ENCODE measurements at regions of chr1 and their contacts with region 1.

Region 1: GRCh38 chr1:229514578-229515275 is 6.6 kb upstream of the NUP133 start:
- DNase-seq: peak; percentile 19
- ATAC-seq: peak; percentile 97
- H3K4me3 Mint-ChIP-seq: no peak overlapping the region
- H3K27ac Mint-ChIP-seq: no peak overlapping the region
- H3K4me1 Mint-ChIP-seq: peaks cover 4% of the 10 kb centered on the region
- H3K27me3 Mint-ChIP-seq: no peaks in the 10 kb centered on the region
- CTCF ChIP-seq: peak; percentile 15

Region 2: GRCh38 chr1:228664399-228664914 is 850.3 kb before region 1 on chr1:
- CTCF ChIA-PET with region 1: interaction called, 4 read pairs
- POLR2A ChIA-PET with region 1: no interaction called
- intact Hi-C with region 1: loop called (anchors 1 kb)
- DNase-seq: peak; percentile 52
- ATAC-seq: peak; percentile 49
- H3K4me3 Mint-ChIP-seq: no peak overlapping the region
- H3K27ac Mint-ChIP-seq: no peak overlapping the region
- H3K4me1 Mint-ChIP-seq: no peaks in the 10 kb centered on the region
- H3K27me3 Mint-ChIP-seq: peaks cover 8% of the 10 kb centered on the region
- CTCF ChIP-seq: peak; percentile 77

Measured in activated B cell treated with CpG ODN at 0.5 μM for 24 hours (primary cell).